ENCODE measurements at regions of chr1 and their contacts with region 1.

Region 1: GRCh38 chr1:226474443-226475141 is 66.7 kb upstream of the PARP1 start:
- DNase-seq: no peak
- ATAC-seq: no peak

Region 2: GRCh38 chr1:224747578-224747977 is 1727.0 kb before region 1 on chr1:
- intact Hi-C with region 1: no loop called
- DNase-seq: no peak
- ATAC-seq: no peak

Region 3: GRCh38 chr1:226201029-226201593 is 273.5 kb before region 1 on chr1:
- intact Hi-C with region 1: loop called (anchors 2 kb)
- DNase-seq: no peak
- ATAC-seq: no peak

Measured in sciatic nerve (tissue), 2 donors.